Aorta (tissue), 5 donors: ENCODE measurements at regions of chr9 and their contacts with region 1.

Region 1: GRCh38 chr9:28155067-28155466 is 581.8 kb upstream of the C9orf72 start:
- DNase-seq: no peak
- ATAC-seq: no peak
- H3K4me3 ChIP-seq: no peak overlapping the region
- H3K27ac ChIP-seq: no peak overlapping the region
- H3K4me1 ChIP-seq: no peaks in the 10 kb centered on the region
- H3K27me3 ChIP-seq: no peaks in the 10 kb centered on the region

Region 2: DNA sequence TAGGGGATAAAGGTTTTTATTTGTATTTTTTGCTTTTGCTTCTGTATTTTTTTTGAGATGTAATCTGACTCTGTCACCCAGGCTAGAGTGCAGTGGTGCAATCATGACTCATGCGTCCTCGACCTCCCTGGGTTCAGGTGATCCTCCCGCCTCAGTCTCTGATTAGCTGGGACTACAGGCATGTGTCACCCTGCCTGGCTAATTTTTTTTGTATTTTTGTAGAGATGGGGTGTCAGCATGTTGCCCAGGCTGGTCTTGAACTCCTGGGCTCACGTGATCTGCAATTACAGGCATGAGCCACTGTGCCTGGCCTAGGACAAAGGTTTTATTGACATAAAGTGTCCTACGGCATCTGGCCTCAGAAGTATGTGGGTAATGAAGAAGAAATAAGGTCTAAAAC is 284.7 kb before region 1 on chr9:
- intact Hi-C with region 1: no loop called
- DNase-seq: no peak
- ATAC-seq: no peak
- H3K4me3 ChIP-seq: no peak overlapping the region
- H3K27ac ChIP-seq: no peak overlapping the region
- H3K4me1 ChIP-seq: no peaks in the 10 kb centered on the region
- H3K27me3 ChIP-seq: no peaks in the 10 kb centered on the region

Region 3: DNA sequence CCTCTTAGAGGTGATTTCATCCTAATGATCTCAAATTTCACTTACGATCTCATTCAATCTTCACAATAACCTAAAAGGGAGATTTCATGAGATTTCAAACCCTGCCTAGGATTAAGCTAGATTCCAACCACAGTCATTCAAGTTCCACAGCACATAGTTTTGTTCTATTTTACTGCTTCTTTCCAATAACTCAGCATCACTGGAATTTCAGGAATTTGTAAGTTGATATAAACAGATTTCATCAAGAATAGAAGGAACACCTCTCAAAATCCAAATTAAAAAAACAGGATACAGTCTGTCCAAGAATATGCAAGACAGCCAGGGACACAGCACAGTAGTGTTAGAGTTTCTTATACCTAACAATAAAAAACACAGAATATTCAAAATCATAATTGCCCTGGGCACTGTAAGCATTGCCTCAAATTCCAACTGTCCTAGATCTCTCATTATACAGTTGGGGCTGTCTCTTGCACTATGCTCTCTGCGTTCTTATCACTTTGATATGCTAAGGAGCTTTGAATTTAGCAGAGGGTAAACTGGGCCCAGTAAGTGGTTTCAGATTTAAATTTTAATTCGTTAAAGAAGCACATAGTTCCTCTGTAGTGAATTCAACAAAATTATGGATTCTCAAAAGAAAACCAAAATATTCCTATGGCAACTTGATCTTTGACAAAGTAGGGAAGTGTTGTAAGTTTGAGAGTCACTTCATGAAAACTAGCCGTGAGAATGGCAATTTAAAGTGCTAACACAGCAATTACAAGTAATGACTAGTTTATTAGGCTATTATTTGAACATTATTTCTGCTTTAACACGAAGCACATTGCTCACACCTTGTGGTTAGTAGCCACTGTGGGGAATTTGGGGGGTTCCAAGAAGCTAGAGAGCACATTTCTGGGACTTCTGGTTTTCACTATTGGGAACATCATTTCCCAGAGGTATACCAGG is 103.2 kb before region 1 on chr9:
- intact Hi-C with region 1: no loop called
- DNase-seq: no peak
- ATAC-seq: no peak
- H3K4me3 ChIP-seq: no peak overlapping the region
- H3K27ac ChIP-seq: no peak overlapping the region
- H3K4me1 ChIP-seq: no peaks in the 10 kb centered on the region
- H3K27me3 ChIP-seq: no peaks in the 10 kb centered on the region

Region 4: DNA sequence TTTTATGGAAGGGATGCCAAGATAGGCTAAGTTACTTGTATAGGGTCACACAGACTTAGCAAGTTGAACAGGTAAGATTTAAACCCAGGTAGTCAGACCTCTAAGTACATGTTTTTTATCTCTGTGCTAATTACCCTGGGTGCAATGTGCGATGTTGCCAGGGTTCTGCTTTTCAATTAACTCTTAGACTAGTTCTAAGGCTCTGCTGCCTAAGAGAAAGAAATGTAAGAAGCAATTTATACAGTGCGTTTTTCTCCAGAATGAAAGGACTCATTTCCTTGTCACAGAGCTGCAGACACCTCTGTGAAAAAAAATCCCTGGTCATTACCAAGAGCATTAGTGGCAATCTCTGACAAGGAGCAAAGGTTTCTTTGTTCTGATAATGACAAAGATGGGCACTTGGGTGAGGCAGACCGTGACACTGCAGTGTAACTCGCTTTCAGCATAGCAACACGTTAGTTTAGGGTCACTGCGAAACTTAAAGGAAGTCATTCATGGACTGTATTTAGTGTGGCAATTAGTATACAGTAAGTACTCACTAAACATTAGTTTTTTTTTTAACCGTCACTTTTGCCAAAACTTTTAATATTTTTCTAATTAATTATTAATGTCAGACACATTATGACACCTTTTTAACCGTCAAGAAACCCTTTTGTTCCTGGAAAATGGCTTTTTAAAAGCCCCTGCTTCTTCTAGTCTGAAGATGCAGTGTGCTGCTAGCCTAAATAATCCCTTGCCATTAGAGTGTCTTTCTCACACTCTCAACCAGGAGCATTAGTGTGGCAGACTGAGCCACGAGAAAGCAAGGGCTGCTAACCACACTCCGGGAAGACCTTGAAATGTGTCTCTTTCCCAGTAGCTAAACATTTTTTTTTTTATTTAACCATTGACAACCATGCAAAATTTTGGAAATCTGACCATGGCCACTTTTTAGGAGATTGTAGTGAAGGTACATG is 61.8 kb before region 1 on chr9:
- intact Hi-C with region 1: loop called in 1 of 2 experiments (anchors 10 kb)
- DNase-seq: no peak
- ATAC-seq: no peak
- H3K4me3 ChIP-seq: no peak overlapping the region
- H3K27ac ChIP-seq: no peak overlapping the region
- H3K4me1 ChIP-seq: no peaks in the 10 kb centered on the region
- H3K27me3 ChIP-seq: no peaks in the 10 kb centered on the region

Region 5: GRCh38 chr9:28179893-28180292 is 24.8 kb after region 1 on chr9:
- intact Hi-C with region 1: loop called in 1 of 2 experiments (anchors 2 kb)
- DNase-seq: no peak
- ATAC-seq: no peak
- H3K4me3 ChIP-seq: no peak overlapping the region
- H3K27ac ChIP-seq: no peak overlapping the region
- H3K4me1 ChIP-seq: no peaks in the 10 kb centered on the region
- H3K27me3 ChIP-seq: no peaks in the 10 kb centered on the region

Region 6: DNA sequence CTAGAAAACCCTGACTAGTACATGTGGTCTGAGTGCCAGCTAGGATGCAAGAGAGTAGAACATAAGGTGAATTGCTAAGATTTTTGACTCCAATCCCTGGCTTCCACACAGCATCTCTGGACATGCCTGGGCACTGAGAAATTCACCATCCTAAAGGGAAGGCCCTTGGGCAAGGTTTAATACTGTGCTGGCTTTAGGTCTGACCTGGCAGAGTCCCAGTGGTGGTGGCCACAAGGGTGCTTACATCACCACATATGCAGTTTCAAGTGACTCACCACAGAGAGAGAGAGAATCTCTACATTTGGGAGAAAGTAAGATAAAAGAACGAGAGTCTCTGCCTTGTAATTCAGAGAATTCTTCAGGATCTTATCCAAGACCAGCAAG is 79.8 kb after region 1 on chr9:
- intact Hi-C with region 1: no loop called
- DNase-seq: no peak
- ATAC-seq: no peak
- H3K4me3 ChIP-seq: no peak overlapping the region
- H3K27ac ChIP-seq: no peak overlapping the region
- H3K4me1 ChIP-seq: no peaks in the 10 kb centered on the region
- H3K27me3 ChIP-seq: no peaks in the 10 kb centered on the region

Region 7: DNA sequence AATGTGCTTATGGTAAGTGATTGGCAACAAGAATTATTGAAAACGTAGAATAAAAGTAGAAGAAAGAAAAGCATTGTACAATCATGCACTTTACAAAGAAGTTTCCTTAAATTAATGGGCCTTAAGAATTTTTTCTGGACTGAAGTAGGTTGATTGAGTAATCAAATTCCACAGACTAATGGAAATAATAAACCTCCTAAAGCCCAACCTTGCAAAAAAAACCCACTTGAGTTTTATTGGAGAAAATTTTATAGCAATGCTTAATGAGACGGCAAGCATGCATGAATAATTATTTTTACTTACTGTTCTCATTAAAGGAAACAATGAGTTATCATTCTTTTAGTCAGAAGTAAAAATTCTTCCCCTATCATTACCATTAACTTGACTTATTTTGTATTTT is 94.4 kb after region 1 on chr9:
- intact Hi-C with region 1: no loop called
- DNase-seq: no peak
- ATAC-seq: no peak
- H3K4me3 ChIP-seq: no peak overlapping the region
- H3K27ac ChIP-seq: no peak overlapping the region
- H3K4me1 ChIP-seq: no peaks in the 10 kb centered on the region
- H3K27me3 ChIP-seq: no peaks in the 10 kb centered on the region